ENCODE measurements at regions of chr15 and their contacts with region 1.

Region 1: GRCh38 chr15:64046347-64047153 is at the start of gene DAPK2:
- DNase-seq: peak; percentile 77
- H3K4me3 ChIP-seq: peak within 1 kb of the TSS; percentile 82
- H3K27ac ChIP-seq: peak within 1 kb of the TSS; percentile 88
- H3K4me1 ChIP-seq: peaks cover 62% of the 10 kb centered on the region
- H3K27me3 ChIP-seq: no peaks in the 10 kb centered on the region
- CTCF ChIP-seq: peak; percentile 87
- total RNA-seq, gene DAPK2: 39.0 TPM

Region 2: DNA sequence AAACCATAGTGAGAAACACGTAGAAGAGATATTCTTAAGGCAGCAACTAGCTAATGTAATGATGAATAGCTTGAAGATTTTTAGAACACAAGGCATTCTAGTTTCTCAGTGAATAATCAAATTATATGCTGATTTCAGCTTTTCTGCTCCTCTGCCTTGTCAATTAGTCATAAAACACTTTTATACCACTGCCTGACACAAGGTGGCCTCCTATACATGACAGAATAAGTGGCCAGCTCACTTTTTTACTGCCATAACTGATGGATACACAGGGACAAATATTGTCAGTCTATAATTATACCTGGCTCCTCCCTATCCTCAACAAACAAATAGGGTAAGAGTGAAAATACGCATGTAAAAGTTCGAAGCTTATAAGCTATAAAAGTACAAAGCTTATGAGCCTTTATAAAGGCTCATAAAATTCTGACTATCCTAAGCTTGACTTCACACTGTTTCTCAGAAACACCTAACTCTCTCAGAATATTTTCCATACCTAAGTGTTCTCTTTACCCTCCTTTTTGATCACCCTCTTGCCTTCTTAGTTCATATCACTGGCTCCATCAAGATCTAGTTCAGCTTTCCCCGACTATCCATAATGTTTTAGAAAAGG is 294.4 kb before region 1 on chr15:
- intact Hi-C with region 1: loop called (anchors 5 kb)
- DNase-seq: no peak
- H3K4me3 ChIP-seq: no peak overlapping the region
- H3K27ac ChIP-seq: no peak overlapping the region
- H3K4me1 ChIP-seq: peaks cover 5% of the 10 kb centered on the region
- H3K27me3 ChIP-seq: no peaks in the 10 kb centered on the region
- CTCF ChIP-seq: peak; percentile 82

Region 3: GRCh38 chr15:63833021-63833696 is 213.4 kb before region 1 on chr15:
- intact Hi-C with region 1: loop called (anchors 10 kb)
- DNase-seq: peak; percentile 32
- H3K4me3 ChIP-seq: peak overlapping the region; percentile 87
- H3K27ac ChIP-seq: peak overlapping the region; percentile 97
- H3K4me1 ChIP-seq: peaks cover 58% of the 10 kb centered on the region
- H3K27me3 ChIP-seq: no peaks in the 10 kb centered on the region
- CTCF ChIP-seq: no peak

Region 4: GRCh38 chr15:63945007-63945788 is 101.4 kb before region 1 on chr15:
- intact Hi-C with region 1: loop called (anchors 10 kb)
- DNase-seq: peak; percentile 72
- H3K4me3 ChIP-seq: no peak overlapping the region
- H3K27ac ChIP-seq: peak overlapping the region; percentile 54
- H3K4me1 ChIP-seq: peaks cover 32% of the 10 kb centered on the region
- H3K27me3 ChIP-seq: no peaks in the 10 kb centered on the region
- CTCF ChIP-seq: peak; percentile 94

Region 5: DNA sequence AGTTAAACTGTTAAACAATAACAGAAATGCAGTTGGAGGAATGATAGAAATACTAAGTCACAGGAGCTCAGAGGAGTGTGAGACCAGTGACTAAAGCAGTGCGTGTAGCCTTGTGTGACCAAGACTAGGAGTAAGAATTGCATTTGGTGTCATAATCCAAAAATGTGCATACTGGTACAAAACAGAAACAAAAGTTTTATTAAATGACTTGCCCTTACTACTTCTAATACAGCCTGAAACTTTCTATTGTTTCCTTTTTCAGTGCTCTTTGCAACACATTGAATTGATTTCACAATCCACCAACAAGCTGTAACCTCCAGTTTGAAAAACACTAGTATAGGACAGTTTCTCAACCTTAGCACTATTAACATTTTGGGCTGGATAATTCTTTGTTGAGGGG is 66.4 kb after region 1 on chr15:
- intact Hi-C with region 1: no loop called
- DNase-seq: no peak
- H3K4me3 ChIP-seq: no peak overlapping the region
- H3K27ac ChIP-seq: peak overlapping the region; percentile 29
- H3K4me1 ChIP-seq: peaks cover 54% of the 10 kb centered on the region
- H3K27me3 ChIP-seq: no peaks in the 10 kb centered on the region
- CTCF ChIP-seq: no peak

Measured in left ventricle myocardium inferior (tissue), 1 donor.